CD4-positive, alpha-beta T cell (primary cell): ENCODE measurements at regions of chr1 and their contacts with region 1.

Region 1: GRCh38 chr1:204446370-204447111 is 34.9 kb upstream of the PPP1R15B start:
- DNase-seq: peak; percentile 69 to 89 (median 74)
- ATAC-seq: peak; percentile 98
- H3K4me3 ChIP-seq: no peak overlapping the region
- H3K4me3 Mint-ChIP-seq: no peak overlapping the region
- H3K27ac ChIP-seq: no peak overlapping the region
- H3K27ac Mint-ChIP-seq: peak overlapping the region; percentile 81
- H3K4me1 ChIP-seq: peaks cover 38% of the 10 kb centered on the region
- H3K4me1 Mint-ChIP-seq: peaks cover 22% of the 10 kb centered on the region
- H3K27me3 ChIP-seq: no peaks in the 10 kb centered on the region
- H3K27me3 Mint-ChIP-seq: no peaks in the 10 kb centered on the region
- CTCF ChIP-seq: peak; percentile 74

Region 2: DNA sequence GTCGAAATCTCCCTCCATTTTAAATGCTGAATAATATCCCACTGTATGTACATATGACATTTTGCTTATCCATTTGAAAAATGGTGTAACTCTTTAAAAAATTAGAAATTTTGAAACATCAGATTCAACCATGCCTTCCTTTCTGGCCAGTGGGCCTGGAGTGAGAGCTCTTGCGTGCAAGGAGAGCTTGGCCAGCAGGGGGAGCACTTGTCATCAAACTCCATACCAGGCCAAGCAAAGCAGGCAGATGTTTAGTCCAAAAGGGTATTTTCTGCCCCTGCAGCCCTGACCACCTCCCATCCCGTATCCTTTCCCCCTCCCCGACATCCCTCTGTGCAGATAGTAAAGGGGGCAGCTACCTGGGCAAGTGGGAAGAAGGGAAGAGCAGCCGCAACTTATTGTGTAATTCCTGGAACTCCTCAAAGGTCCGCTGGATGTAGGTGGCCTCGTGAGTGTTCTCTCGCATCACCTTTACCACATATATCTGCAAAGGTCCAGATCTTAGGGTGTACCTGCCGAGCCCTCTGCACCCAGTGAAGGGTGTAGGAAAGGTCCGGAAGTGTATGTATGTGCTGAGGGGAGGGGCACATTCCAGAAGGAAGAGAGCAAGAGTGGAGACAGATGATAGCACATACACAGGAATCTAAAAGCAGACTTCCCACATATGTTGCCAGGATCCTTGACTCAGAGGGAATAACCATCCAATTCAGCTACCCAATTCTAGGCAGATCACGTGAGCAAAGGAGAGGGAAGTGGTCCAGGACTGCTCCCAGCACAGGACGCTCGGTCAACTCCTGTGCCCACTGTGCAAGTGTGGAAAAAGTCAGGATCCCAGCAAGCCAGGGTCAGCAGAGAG is 15.0 kb before region 1 on chr1:
- CTCF ChIA-PET with region 1: interaction called, 16 read pairs
- POLR2A ChIA-PET with region 1: no interaction called
- intact Hi-C with region 1: no loop called
- DNase-seq: peak; percentile 68 to 90 (median 76)
- ATAC-seq: peak; percentile 90
- H3K4me3 ChIP-seq: no peak overlapping the region
- H3K4me3 Mint-ChIP-seq: no peak overlapping the region
- H3K27ac ChIP-seq: no peak overlapping the region
- H3K27ac Mint-ChIP-seq: no peak overlapping the region
- H3K4me1 ChIP-seq: peaks cover 3% of the 10 kb centered on the region
- H3K4me1 Mint-ChIP-seq: no peaks in the 10 kb centered on the region
- H3K27me3 ChIP-seq: no peaks in the 10 kb centered on the region
- H3K27me3 Mint-ChIP-seq: no peaks in the 10 kb centered on the region
- CTCF ChIP-seq: peak; percentile 97

Region 3: DNA sequence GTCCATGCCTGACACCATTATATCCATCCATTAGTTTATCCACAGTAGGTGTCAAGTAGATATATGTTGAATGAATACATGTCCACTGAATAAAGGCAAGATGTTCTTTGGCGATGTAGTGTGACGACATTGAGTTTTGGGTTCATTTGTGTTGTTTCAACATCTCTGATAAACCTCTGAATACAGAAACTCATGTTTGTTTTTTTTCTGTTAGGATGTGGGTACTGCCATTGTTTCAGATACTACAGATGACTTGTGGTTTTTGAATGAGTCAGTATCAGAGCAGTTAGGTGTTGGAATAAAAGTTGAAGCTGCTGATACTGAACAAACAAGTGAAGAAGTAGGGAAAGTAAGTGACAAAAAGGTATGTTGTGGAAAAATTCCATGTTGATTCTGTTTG is 97.8 kb after region 1 on chr1:
- CTCF ChIA-PET with region 1: interaction called, 5 read pairs
- POLR2A ChIA-PET with region 1: no interaction called
- intact Hi-C with region 1: loop called in 1 of 2 experiments (anchors 5 kb)
- DNase-seq: peak in 3 of 14 experiments; percentile 70 to 84 (median 75)
- ATAC-seq: peak; percentile 94
- H3K4me3 ChIP-seq: no peak overlapping the region
- H3K4me3 Mint-ChIP-seq: peak overlapping the region; percentile 49
- H3K27ac ChIP-seq: peak overlapping the region; percentile 41 to 65
- H3K27ac Mint-ChIP-seq: peak overlapping the region; percentile 84
- H3K4me1 ChIP-seq: peaks cover 28% of the 10 kb centered on the region
- H3K4me1 Mint-ChIP-seq: peaks cover 63% of the 10 kb centered on the region
- H3K27me3 ChIP-seq: no peaks in the 10 kb centered on the region
- H3K27me3 Mint-ChIP-seq: no peaks in the 10 kb centered on the region
- CTCF ChIP-seq: no peak

Region 4: GRCh38 chr1:204578867-204579664 is 132.5 kb after region 1 on chr1:
- CTCF ChIA-PET with region 1: no interaction called
- POLR2A ChIA-PET with region 1: no interaction called
- intact Hi-C with region 1: no loop called
- DNase-seq: peak in 4 of 14 experiments; percentile 24 to 49 (median 28)
- ATAC-seq: peak; percentile 55
- H3K4me3 ChIP-seq: peak overlapping the region; percentile 53
- H3K4me3 Mint-ChIP-seq: peak overlapping the region; percentile 86
- H3K27ac ChIP-seq: peak overlapping the region; percentile 25 to 69
- H3K27ac Mint-ChIP-seq: peak overlapping the region; percentile 88
- H3K4me1 ChIP-seq: peaks cover 28% of the 10 kb centered on the region
- H3K4me1 Mint-ChIP-seq: peaks cover 38% of the 10 kb centered on the region
- H3K27me3 ChIP-seq: no peaks in the 10 kb centered on the region
- H3K27me3 Mint-ChIP-seq: no peaks in the 10 kb centered on the region
- CTCF ChIP-seq: no peak

Region 5: DNA sequence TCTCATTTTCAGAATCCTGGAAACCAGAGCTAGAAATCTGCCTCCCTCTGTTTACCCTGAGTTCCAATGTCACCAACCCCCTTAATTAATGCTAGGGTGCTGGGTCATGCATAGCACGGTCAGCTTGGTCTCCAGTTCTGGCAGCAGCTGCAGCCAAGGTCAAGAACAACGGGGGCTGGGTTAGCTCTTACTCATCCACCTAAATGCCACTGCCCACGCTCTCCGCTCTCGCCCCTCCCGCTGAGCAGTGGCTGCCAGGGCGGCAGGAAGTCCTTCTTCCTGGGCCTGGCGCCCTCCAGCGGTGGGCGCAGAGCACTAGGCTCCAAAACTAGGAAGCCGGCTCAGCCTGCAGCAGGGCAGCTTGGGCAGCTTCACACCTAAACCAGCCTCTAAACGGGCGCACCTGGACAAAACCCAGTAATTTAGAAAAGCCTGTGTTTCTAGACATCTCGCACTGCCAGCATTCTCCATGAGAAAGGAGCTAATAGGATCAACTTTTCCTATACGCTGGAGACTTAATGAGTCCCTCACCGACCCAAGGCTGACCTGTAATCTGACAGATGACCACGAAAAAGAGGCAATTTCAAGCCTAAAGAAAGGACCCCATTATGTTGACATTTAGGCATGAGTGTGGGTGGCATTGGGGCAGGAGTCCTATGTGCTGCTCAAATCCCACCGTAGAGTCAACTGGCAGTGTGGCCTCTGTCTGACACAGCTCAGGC is 317.3 kb after region 1 on chr1:
- CTCF ChIA-PET with region 1: no interaction called
- POLR2A ChIA-PET with region 1: no interaction called
- intact Hi-C with region 1: loop called in 1 of 2 experiments (anchors 10 kb)
- DNase-seq: peak; percentile 37 to 80 (median 56)
- ATAC-seq: peak; percentile 98
- H3K4me3 ChIP-seq: no peak overlapping the region
- H3K4me3 Mint-ChIP-seq: peak overlapping the region; percentile 30
- H3K27ac ChIP-seq: no peak overlapping the region
- H3K27ac Mint-ChIP-seq: no peak overlapping the region
- H3K4me1 ChIP-seq: peaks cover 8% of the 10 kb centered on the region
- H3K4me1 Mint-ChIP-seq: peaks cover 7% of the 10 kb centered on the region
- H3K27me3 ChIP-seq: peaks cover 0 to 3% of the 10 kb centered on the region in 2 experiments
- H3K27me3 Mint-ChIP-seq: peaks cover 24% of the 10 kb centered on the region
- CTCF ChIP-seq: peak; percentile 78